ENCODE measurements at regions of chr3 and their contacts with region 1.

Region 1: GRCh38 chr3:112734718-112735350 is 93.9 kb upstream of the CCDC80 start:
- DNase-seq: peak; percentile 52
- H3K27ac ChIP-seq: no peak overlapping the region
- CTCF ChIP-seq: peak; percentile 43

Region 2: GRCh38 chr3:112814266-112814665 is 79.4 kb after region 1 on chr3:
- CTCF ChIA-PET with region 1: interaction called, 25 read pairs
- POLR2A ChIA-PET with region 1: no interaction called
- DNase-seq: peak; percentile 45
- H3K27ac ChIP-seq: no peak overlapping the region
- CTCF ChIP-seq: peak; percentile 51